ENCODE measurements at regions of chr1 and their contacts with region 1.

Region 1: GRCh38 chr1:15062479-15063099 is 91.0 kb upstream of the TMEM51 start:
- DNase-seq: peak; percentile 24
- H3K4me3 Mint-ChIP-seq: no peak overlapping the region
- H3K27ac Mint-ChIP-seq: no peak overlapping the region
- H3K4me1 Mint-ChIP-seq: no peaks in the 10 kb centered on the region
- H3K27me3 Mint-ChIP-seq: no peaks in the 10 kb centered on the region
- CTCF ChIP-seq: peak; percentile 55

Region 2: GRCh38 chr1:14699620-14700019 is 363.0 kb before region 1 on chr1:
- CTCF ChIA-PET with region 1: no interaction called
- POLR2A ChIA-PET with region 1: no interaction called
- intact Hi-C with region 1: no loop called
- DNase-seq: no peak
- H3K4me3 Mint-ChIP-seq: no peak overlapping the region
- H3K27ac Mint-ChIP-seq: no peak overlapping the region
- H3K4me1 Mint-ChIP-seq: no peaks in the 10 kb centered on the region
- H3K27me3 Mint-ChIP-seq: peaks cover 49% of the 10 kb centered on the region
- CTCF ChIP-seq: no peak

Region 3: DNA sequence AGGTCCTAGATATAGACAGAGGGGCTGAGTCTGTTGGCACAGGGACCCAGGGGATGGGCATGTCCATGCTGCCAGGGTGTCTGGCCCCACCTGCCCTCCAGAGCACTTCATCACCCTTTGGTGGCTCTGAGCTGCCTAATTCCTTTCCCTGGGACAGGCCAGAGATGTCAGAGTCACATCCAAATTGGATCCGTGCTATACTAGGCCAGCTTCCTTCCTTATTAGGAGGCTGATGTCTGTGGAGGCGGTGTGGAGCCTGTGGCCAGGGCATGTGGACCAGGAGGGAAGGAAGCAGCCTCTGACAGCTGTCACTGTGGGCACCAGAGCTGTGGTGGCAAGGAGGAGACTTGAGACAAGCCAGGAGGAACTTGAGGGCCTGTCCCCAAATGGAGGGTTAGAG is 13.2 kb after region 1 on chr1:
- CTCF ChIA-PET with region 1: no interaction called
- POLR2A ChIA-PET with region 1: no interaction called
- intact Hi-C with region 1: no loop called
- DNase-seq: no peak
- H3K4me3 Mint-ChIP-seq: no peak overlapping the region
- H3K27ac Mint-ChIP-seq: no peak overlapping the region
- H3K4me1 Mint-ChIP-seq: no peaks in the 10 kb centered on the region
- H3K27me3 Mint-ChIP-seq: no peaks in the 10 kb centered on the region
- CTCF ChIP-seq: no peak

Region 4: GRCh38 chr1:15100121-15100874 is 37.7 kb after region 1 on chr1:
- CTCF ChIA-PET with region 1: interaction called, 3 read pairs
- POLR2A ChIA-PET with region 1: no interaction called
- intact Hi-C with region 1: loop called (anchors 1 kb)
- DNase-seq: peak; percentile 49
- H3K4me3 Mint-ChIP-seq: no peak overlapping the region
- H3K27ac Mint-ChIP-seq: no peak overlapping the region
- H3K4me1 Mint-ChIP-seq: peaks cover 6% of the 10 kb centered on the region
- H3K27me3 Mint-ChIP-seq: peaks cover 38% of the 10 kb centered on the region
- CTCF ChIP-seq: peak; percentile 88